B cell (primary cell): ENCODE measurements at regions of chr6 and their contacts with region 1.

Region 1: DNA sequence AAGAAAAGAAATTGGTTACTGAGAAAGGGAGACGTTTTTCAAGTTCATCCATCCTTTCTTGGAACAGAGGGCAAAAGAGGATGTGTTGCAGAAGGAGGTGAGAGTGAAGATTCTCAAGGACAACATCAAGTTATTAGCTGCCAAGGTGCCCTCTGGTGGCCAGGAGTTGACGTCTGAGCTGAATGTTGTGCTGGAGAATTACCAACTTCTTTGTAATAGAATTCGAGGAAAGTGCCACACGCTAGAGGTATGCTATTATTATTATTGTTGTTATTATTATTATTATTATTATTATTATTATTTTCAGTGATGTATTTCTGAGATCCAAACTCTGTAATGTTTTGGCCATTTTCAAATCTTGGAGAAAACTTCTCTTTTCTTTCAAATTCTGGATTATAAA is 197.0 kb downstream of the UTRN start:
- DNase-seq: peak; percentile 76
- ATAC-seq: peak; percentile 71
- H3K4me3 ChIP-seq: no peak overlapping the region
- H3K4me3 Mint-ChIP-seq: no peak overlapping the region
- H3K27ac ChIP-seq: peak overlapping the region in 1 of 2 donors; percentile 21
- H3K27ac Mint-ChIP-seq: peak overlapping the region; percentile 3
- H3K4me1 ChIP-seq: no peaks in the 10 kb centered on the region
- H3K4me1 Mint-ChIP-seq: no peaks in the 10 kb centered on the region
- H3K27me3 ChIP-seq: no peaks in the 10 kb centered on the region
- H3K27me3 Mint-ChIP-seq: no peaks in the 10 kb centered on the region
- CTCF ChIP-seq: peak; percentile 80

Region 2: GRCh38 chr6:143940011-143940597 is 542.0 kb before region 1 on chr6:
- CTCF ChIA-PET with region 1: interaction called, 3 read pairs
- POLR2A ChIA-PET with region 1: no interaction called
- intact Hi-C with region 1: loop called (anchors 2 kb)
- DNase-seq: peak; percentile 74
- ATAC-seq: peak; percentile 98
- H3K4me3 ChIP-seq: no peak overlapping the region
- H3K4me3 Mint-ChIP-seq: no peak overlapping the region
- H3K27ac ChIP-seq: no peak overlapping the region
- H3K27ac Mint-ChIP-seq: no peak overlapping the region
- H3K4me1 ChIP-seq: no peaks in the 10 kb centered on the region
- H3K4me1 Mint-ChIP-seq: peaks cover 3% of the 10 kb centered on the region
- H3K27me3 ChIP-seq: no peaks in the 10 kb centered on the region
- H3K27me3 Mint-ChIP-seq: no peaks in the 10 kb centered on the region
- CTCF ChIP-seq: peak; percentile 92

Region 3: DNA sequence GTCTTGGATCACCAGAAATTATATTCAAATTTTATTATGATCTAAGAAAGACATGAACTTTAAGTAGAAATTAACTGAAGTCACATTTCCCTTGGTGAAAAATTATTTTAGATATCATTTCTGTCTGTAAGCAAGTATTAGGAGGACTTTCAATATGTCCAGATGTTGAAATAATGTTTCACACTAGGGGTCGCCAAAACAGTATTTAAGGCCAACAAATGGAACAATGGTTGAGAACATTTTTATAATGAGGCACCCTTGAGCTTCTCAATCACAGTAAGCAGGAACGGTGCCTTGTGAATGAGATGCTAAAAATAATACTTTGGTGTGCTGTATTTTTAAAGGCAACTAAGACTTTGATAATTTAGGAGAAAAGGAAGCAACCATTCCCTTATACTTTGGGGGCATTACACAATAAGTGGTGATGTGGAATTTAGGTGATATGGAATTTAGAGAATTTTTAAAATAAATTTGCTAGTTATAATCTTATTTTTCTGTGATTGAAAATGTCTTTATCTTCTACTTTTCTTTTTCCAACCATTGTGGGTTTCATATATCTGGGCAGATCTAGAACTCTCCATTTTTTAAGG is 377.1 kb before region 1 on chr6:
- CTCF ChIA-PET with region 1: interaction called, 98 read pairs
- POLR2A ChIA-PET with region 1: no interaction called
- intact Hi-C with region 1: loop called (anchors 1 kb)
- DNase-seq: peak; percentile 81
- ATAC-seq: peak; percentile 80
- H3K4me3 ChIP-seq: no peak overlapping the region
- H3K4me3 Mint-ChIP-seq: no peak overlapping the region
- H3K27ac ChIP-seq: no peak overlapping the region
- H3K27ac Mint-ChIP-seq: no peak overlapping the region
- H3K4me1 ChIP-seq: no peaks in the 10 kb centered on the region
- H3K4me1 Mint-ChIP-seq: no peaks in the 10 kb centered on the region
- H3K27me3 ChIP-seq: no peaks in the 10 kb centered on the region
- H3K27me3 Mint-ChIP-seq: no peaks in the 10 kb centered on the region
- CTCF ChIP-seq: peak; percentile 84

Region 4: DNA sequence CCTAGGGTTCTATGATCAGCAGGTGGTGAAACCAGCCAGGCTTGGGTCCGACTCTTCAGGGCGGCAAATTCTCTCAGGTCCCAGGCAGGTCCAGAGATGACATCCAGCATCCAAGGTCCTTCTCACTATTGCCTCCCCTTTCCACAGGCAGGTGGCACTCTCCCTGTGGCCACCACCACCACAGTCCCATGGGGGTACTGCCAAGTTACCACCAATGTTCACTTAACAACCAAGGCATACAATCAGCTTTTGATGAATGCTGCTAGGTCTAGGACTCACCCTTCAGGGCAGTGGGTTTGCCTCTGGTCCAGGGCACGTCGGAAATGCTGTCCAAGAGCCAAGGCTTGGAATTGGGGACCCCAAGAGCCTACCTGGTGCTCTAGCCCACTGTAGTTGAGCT is 237.5 kb before region 1 on chr6:
- CTCF ChIA-PET with region 1: interaction called, 16 read pairs
- POLR2A ChIA-PET with region 1: no interaction called
- intact Hi-C with region 1: no loop called
- DNase-seq: peak; percentile 27
- ATAC-seq: no peak
- H3K4me3 ChIP-seq: no peak overlapping the region
- H3K4me3 Mint-ChIP-seq: no peak overlapping the region
- H3K27ac ChIP-seq: no peak overlapping the region
- H3K27ac Mint-ChIP-seq: no peak overlapping the region
- H3K4me1 ChIP-seq: peaks cover 0 to 3% of the 10 kb centered on the region in 2 donors
- H3K4me1 Mint-ChIP-seq: peaks cover 15% of the 10 kb centered on the region
- H3K27me3 ChIP-seq: peaks cover 0 to 3% (median 0%) of the 10 kb centered on the region in 4 experiments
- H3K27me3 Mint-ChIP-seq: peaks cover 15% of the 10 kb centered on the region
- CTCF ChIP-seq: no peak

Region 5: GRCh38 chr6:144352331-144352730 is 129.8 kb before region 1 on chr6:
- CTCF ChIA-PET with region 1: no interaction called
- POLR2A ChIA-PET with region 1: no interaction called
- intact Hi-C with region 1: no loop called
- DNase-seq: peak; percentile 79
- ATAC-seq: peak; percentile 66
- H3K4me3 ChIP-seq: no peak overlapping the region
- H3K4me3 Mint-ChIP-seq: peak overlapping the region; percentile 80
- H3K27ac ChIP-seq: no peak overlapping the region
- H3K27ac Mint-ChIP-seq: peak overlapping the region; percentile 77
- H3K4me1 ChIP-seq: peaks cover 65 to 72% of the 10 kb centered on the region in 2 donors
- H3K4me1 Mint-ChIP-seq: peaks cover 81% of the 10 kb centered on the region
- H3K27me3 ChIP-seq: no peaks in the 10 kb centered on the region
- H3K27me3 Mint-ChIP-seq: no peaks in the 10 kb centered on the region
- CTCF ChIP-seq: no peak

Region 6: GRCh38 chr6:144500892-144501291 is 18.8 kb after region 1 on chr6:
- CTCF ChIA-PET with region 1: interaction called, 16 read pairs
- POLR2A ChIA-PET with region 1: no interaction called
- intact Hi-C with region 1: no loop called
- DNase-seq: no peak
- ATAC-seq: no peak
- H3K4me3 ChIP-seq: no peak overlapping the region
- H3K4me3 Mint-ChIP-seq: no peak overlapping the region
- H3K27ac ChIP-seq: no peak overlapping the region
- H3K27ac Mint-ChIP-seq: peak overlapping the region; percentile 21
- H3K4me1 ChIP-seq: no peaks in the 10 kb centered on the region
- H3K4me1 Mint-ChIP-seq: peaks cover 5% of the 10 kb centered on the region
- H3K27me3 ChIP-seq: no peaks in the 10 kb centered on the region
- H3K27me3 Mint-ChIP-seq: no peaks in the 10 kb centered on the region
- CTCF ChIP-seq: no peak

Region 7: DNA sequence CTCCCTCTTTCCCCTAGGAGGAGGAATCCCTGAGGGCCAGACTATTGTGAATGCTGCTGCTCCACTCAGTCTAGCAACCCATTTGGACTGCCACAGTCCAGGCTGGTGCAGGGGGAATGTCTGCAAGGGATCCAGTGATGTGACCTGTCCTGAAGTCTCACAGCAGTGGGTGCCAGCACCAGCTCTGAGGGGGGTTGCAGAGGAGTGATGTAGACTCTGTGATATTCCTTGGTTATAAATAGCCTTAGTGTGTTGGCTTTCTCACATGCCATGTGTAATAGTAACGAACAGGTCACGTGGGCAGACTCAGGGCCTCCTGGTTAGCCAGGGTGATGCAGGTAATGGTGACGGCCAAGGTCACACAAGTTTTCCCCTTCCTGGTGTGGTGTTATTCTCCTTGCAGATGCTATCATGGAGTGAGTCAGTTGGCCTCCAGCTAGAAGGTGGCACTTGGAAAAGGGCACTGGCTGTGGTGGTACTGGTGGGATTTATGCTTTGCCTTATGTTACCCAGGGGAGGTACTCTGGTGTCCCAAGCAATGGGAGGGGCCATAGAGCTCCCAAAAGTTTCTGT is 207.4 kb after region 1 on chr6:
- CTCF ChIA-PET with region 1: no interaction called
- POLR2A ChIA-PET with region 1: no interaction called
- intact Hi-C with region 1: no loop called
- DNase-seq: no peak
- ATAC-seq: no peak
- H3K4me3 ChIP-seq: no peak overlapping the region
- H3K4me3 Mint-ChIP-seq: no peak overlapping the region
- H3K27ac ChIP-seq: no peak overlapping the region
- H3K27ac Mint-ChIP-seq: no peak overlapping the region
- H3K4me1 ChIP-seq: no peaks in the 10 kb centered on the region
- H3K4me1 Mint-ChIP-seq: peaks cover 20% of the 10 kb centered on the region
- H3K27me3 ChIP-seq: no peaks in the 10 kb centered on the region
- H3K27me3 Mint-ChIP-seq: no peaks in the 10 kb centered on the region
- CTCF ChIP-seq: no peak

Region 8: GRCh38 chr6:144944106-144944505 is 462.0 kb after region 1 on chr6:
- CTCF ChIA-PET with region 1: no interaction called
- POLR2A ChIA-PET with region 1: no interaction called
- intact Hi-C with region 1: no loop called
- DNase-seq: no peak
- ATAC-seq: no peak
- H3K4me3 ChIP-seq: no peak overlapping the region
- H3K4me3 Mint-ChIP-seq: no peak overlapping the region
- H3K27ac ChIP-seq: no peak overlapping the region
- H3K27ac Mint-ChIP-seq: no peak overlapping the region
- H3K4me1 ChIP-seq: no peaks in the 10 kb centered on the region
- H3K4me1 Mint-ChIP-seq: no peaks in the 10 kb centered on the region
- H3K27me3 ChIP-seq: peaks cover 0 to 3% (median 0%) of the 10 kb centered on the region in 4 experiments
- H3K27me3 Mint-ChIP-seq: peaks cover 3% of the 10 kb centered on the region
- CTCF ChIP-seq: no peak